Esophagus muscularis mucosa (tissue), 4 donors: ENCODE measurements at regions of chr2 and their contacts with region 1.

Region 1: GRCh38 chr2:75676464-75676863 is 29.9 kb downstream of the MRPL19 start:
- DNase-seq: no peak
- H3K4me3 ChIP-seq: no peak overlapping the region
- H3K27ac ChIP-seq: no peak overlapping the region
- H3K4me1 ChIP-seq: peaks cover 0 to 8% (median 6%) of the 10 kb centered on the region in 4 donors
- H3K27me3 ChIP-seq: no peaks in the 10 kb centered on the region
- CTCF ChIP-seq: no peak
- EP300 ChIP-seq: no peak
- POLR2A ChIP-seq: no peak

Region 2: DNA sequence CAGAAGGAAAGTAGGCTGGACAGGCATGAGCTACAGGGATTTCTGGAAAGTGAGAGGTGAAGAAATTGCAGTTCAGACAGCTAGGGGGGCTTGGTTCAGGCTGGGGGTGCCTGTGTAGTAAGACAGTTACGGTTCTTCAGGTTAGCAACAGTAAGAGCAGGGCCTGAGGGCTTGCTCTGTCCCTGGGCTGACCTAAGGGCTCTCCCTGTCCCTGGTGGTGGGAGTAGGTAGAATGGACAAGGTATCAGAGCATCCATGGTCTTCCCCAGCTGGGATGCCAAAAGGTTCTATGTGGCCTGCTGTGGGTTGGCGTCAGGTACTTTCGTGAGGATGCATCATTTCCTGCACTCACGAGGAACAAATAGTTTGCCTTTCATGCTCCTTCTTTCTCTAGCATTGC is 442.5 kb before region 1 on chr2:
- intact Hi-C with region 1: no loop called
- DNase-seq: no peak
- H3K4me3 ChIP-seq: no peak overlapping the region
- H3K27ac ChIP-seq: no peak overlapping the region
- H3K4me1 ChIP-seq: peaks cover 0 to under 1% (median 0%) of the 10 kb centered on the region in 4 donors
- H3K27me3 ChIP-seq: no peaks in the 10 kb centered on the region
- CTCF ChIP-seq: no peak
- EP300 ChIP-seq: no peak
- POLR2A ChIP-seq: no peak

Region 3: GRCh38 chr2:75640621-75641121 is 35.8 kb before region 1 on chr2:
- intact Hi-C with region 1: loop called (anchors 5 kb)
- DNase-seq: no peak
- H3K4me3 ChIP-seq: no peak overlapping the region
- H3K27ac ChIP-seq: peak overlapping the region in 2 of 4 donors; percentile 9 to 46
- H3K4me1 ChIP-seq: peaks cover 0 to 15% (median 5%) of the 10 kb centered on the region in 4 donors
- H3K27me3 ChIP-seq: peaks cover 0 to 15% (median 2%) of the 10 kb centered on the region in 4 donors
- CTCF ChIP-seq: peak in 2 of 3 experiments; percentile 88 to 93
- EP300 ChIP-seq: no peak
- POLR2A ChIP-seq: no peak